Sigmoid colon (tissue), 7 donors: ENCODE measurements at regions of chr13 and their contacts with region 1.

Region 1: GRCh38 chr13:46655377-46656180 is 102.6 kb downstream of the LRCH1 start:
- DNase-seq: no peak
- H3K4me3 ChIP-seq: peak overlapping the region in 2 of 4 donors; percentile 11 to 20
- H3K27ac ChIP-seq: peak overlapping the region; percentile 76 to 87 (median 82)
- H3K4me1 ChIP-seq: peaks cover 0 to 55% (median 34%) of the 10 kb centered on the region in 4 donors
- H3K27me3 ChIP-seq: no peaks in the 10 kb centered on the region
- CTCF ChIP-seq: no peak
- EP300 ChIP-seq: peak in 2 of 4 donors; percentile 4 to 41
- POLR2A ChIP-seq: no peak

Region 2: DNA sequence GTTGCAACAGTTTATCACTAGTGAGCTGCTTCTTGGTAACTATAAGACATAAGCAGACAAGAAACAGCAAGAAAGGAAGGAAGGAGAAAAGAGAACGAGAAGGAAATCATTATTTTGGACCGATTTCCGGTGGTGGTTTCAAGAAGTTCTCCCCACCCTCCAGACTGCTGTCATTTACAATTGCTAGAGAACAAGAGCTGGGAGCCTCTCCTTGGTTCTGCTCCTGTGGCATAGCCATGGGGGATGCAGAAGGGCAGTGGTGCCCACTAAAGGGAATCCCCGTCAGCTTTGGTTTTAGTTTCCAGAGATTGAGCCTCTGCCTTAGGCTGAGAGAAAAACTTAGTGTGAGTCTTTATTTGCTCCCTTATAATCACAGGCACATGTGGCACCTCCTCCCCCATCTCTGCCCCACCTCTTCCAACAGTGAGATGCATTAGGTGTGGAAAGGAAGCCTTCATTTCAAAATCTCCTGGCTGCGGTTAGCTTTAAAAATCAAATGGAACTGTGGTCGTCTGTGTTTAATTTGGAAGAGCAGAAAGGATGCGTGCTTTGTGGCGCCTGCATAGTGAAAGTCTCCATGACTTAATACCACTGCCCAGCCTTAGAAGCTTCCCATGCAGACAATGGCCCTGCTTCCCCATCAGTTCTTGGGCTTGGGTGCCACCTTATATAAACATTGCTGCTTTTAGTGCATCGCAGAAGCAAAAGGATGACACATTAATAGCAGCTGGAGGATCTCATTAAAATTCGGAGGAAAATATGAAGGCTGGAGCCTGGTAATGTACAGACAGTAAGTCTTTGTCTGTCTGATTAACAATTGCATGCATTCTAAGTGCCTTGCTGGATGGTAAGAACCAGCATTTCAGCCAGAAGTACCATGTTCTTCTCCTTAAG is 77.6 kb before region 1 on chr13:
- intact Hi-C with region 1: loop called (anchors 5 kb)
- DNase-seq: peak; percentile 66
- H3K4me3 ChIP-seq: peak overlapping the region in 2 of 4 donors; percentile 6 to 17
- H3K27ac ChIP-seq: peak overlapping the region; percentile 55 to 78 (median 68)
- H3K4me1 ChIP-seq: peaks cover 0 to 69% (median 66%) of the 10 kb centered on the region in 4 donors
- H3K27me3 ChIP-seq: no peaks in the 10 kb centered on the region
- CTCF ChIP-seq: no peak
- EP300 ChIP-seq: peak in 3 of 4 donors; percentile 26 to 49 (median 36)
- POLR2A ChIP-seq: no peak

Region 3: GRCh38 chr13:46622630-46623256 is 32.8 kb before region 1 on chr13:
- intact Hi-C with region 1: loop called (anchors 5 kb)
- DNase-seq: peak; percentile 91
- H3K4me3 ChIP-seq: peak overlapping the region in 1 of 4 donors; percentile 10
- H3K27ac ChIP-seq: peak overlapping the region; percentile 73 to 80 (median 76)
- H3K4me1 ChIP-seq: peaks cover 0 to 75% (median 57%) of the 10 kb centered on the region in 4 donors
- H3K27me3 ChIP-seq: no peaks in the 10 kb centered on the region
- CTCF ChIP-seq: no peak
- EP300 ChIP-seq: peak in 1 of 4 donors; percentile 12
- POLR2A ChIP-seq: no peak